Caco-2 (cell line): ENCODE measurements at regions of chr5 and their contacts with region 1.

Region 1: DNA sequence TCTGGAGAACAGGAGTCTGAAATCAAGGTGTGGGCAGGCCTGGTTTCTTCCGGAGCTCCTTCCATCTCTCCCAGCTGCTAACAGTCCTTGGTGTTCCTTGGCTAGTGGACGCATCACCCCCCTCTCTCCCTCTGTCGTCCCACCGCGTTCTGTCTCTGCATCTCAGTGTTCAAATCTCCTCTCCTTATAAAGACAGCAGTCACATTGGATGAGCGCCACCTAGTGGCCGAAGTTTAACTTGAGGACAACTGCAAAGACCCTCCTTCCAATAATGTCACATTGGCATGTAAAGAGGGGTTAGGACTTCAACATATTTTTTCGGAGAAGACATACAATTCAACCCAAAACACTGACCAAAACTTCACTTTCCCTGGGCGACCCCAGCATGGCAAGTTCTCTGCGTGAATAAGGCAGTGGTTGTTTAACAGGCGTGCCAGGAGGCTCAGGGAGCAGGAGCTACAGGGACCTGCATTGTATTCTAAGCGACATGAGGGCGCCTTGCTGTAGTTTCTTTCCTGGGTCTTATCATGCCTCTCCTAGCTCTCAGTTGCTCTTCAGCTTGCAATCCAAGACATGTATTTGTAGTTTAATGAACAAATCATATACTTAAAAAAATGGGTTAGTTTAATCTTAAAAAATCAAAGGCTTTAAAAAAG is 27.9 kb upstream of the BASP1 start:
- DNase-seq: peak; percentile 78 to 81
- H3K4me3 ChIP-seq: no peak overlapping the region
- H3K4me3 Mint-ChIP-seq: no peak overlapping the region
- H3K27ac Mint-ChIP-seq: peak overlapping the region; percentile 65
- H3K4me1 ChIP-seq: peaks cover 21% of the 10 kb centered on the region
- H3K4me1 Mint-ChIP-seq: peaks cover 28% of the 10 kb centered on the region
- H3K27me3 ChIP-seq: no peaks in the 10 kb centered on the region
- H3K27me3 Mint-ChIP-seq: no peaks in the 10 kb centered on the region
- CTCF ChIP-seq: peak; percentile 77 to 92

Region 2: DNA sequence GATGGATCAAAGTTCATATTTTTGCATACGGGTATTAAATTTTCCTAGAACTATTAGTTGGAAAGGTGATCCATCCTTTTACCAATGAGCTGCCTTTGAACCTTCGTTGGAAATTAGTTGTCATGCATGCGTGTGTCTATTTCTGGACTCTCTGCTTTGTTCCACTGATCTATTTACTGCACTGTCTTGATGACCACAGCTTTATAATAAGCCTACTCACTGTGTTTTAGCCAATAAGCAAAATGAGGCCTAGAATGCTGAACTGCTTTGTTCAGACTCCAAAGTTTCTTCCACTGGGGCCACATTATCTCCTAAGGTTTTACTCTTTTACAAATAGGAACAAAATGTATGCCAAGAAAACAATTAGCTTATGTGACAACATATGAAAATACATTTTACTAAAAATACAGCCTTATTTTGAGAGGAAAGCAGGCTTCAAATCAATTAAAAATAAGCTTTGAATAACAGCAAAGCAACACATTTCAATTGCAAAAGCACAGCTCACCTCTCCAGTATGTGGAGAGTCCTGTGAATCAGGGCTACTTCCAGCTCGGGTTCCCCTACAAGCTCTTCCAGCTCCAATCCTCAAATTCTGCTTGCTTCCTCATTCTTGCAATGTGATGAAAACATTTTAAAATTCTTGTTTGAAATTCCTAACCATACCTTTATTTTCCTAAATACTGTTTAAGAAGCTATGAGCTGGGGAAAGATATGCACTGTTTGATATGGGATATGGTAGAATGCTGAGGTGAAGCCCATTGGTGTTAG is 644.7 kb before region 1 on chr5:
- CTCF ChIA-PET with region 1: no interaction called
- POLR2A ChIA-PET with region 1: no interaction called
- intact Hi-C with region 1: no loop called
- DNase-seq: no peak
- H3K4me3 ChIP-seq: no peak overlapping the region
- H3K4me3 Mint-ChIP-seq: no peak overlapping the region
- H3K27ac Mint-ChIP-seq: peak overlapping the region; percentile 73
- H3K4me1 ChIP-seq: peaks cover 62% of the 10 kb centered on the region
- H3K4me1 Mint-ChIP-seq: peaks cover 56% of the 10 kb centered on the region
- H3K27me3 ChIP-seq: no peaks in the 10 kb centered on the region
- H3K27me3 Mint-ChIP-seq: no peaks in the 10 kb centered on the region
- CTCF ChIP-seq: no peak

Region 3: GRCh38 chr5:16690243-16690852 is 499.2 kb before region 1 on chr5:
- CTCF ChIA-PET with region 1: interaction called, 3 read pairs
- POLR2A ChIA-PET with region 1: no interaction called
- intact Hi-C with region 1: loop called (anchors 1 kb)
- DNase-seq: peak; percentile 54 to 76
- H3K4me3 ChIP-seq: no peak overlapping the region
- H3K4me3 Mint-ChIP-seq: no peak overlapping the region
- H3K27ac Mint-ChIP-seq: peak overlapping the region; percentile 13
- H3K4me1 ChIP-seq: no peaks in the 10 kb centered on the region
- H3K4me1 Mint-ChIP-seq: no peaks in the 10 kb centered on the region
- H3K27me3 ChIP-seq: no peaks in the 10 kb centered on the region
- H3K27me3 Mint-ChIP-seq: no peaks in the 10 kb centered on the region
- CTCF ChIP-seq: peak; percentile 79 to 81

Region 4: GRCh38 chr5:16791036-16791705 is 398.3 kb before region 1 on chr5:
- CTCF ChIA-PET with region 1: interaction called, 8 read pairs
- POLR2A ChIA-PET with region 1: no interaction called
- intact Hi-C with region 1: loop called (anchors 1 kb)
- DNase-seq: peak in 1 of 2 experiments; percentile 63
- H3K4me3 ChIP-seq: no peak overlapping the region
- H3K4me3 Mint-ChIP-seq: no peak overlapping the region
- H3K27ac Mint-ChIP-seq: no peak overlapping the region
- H3K4me1 ChIP-seq: no peaks in the 10 kb centered on the region
- H3K4me1 Mint-ChIP-seq: no peaks in the 10 kb centered on the region
- H3K27me3 ChIP-seq: no peaks in the 10 kb centered on the region; the same call in 1 of the 2 replicates
- H3K27me3 Mint-ChIP-seq: no peaks in the 10 kb centered on the region
- CTCF ChIP-seq: peak; percentile 65 to 73

Region 5: DNA sequence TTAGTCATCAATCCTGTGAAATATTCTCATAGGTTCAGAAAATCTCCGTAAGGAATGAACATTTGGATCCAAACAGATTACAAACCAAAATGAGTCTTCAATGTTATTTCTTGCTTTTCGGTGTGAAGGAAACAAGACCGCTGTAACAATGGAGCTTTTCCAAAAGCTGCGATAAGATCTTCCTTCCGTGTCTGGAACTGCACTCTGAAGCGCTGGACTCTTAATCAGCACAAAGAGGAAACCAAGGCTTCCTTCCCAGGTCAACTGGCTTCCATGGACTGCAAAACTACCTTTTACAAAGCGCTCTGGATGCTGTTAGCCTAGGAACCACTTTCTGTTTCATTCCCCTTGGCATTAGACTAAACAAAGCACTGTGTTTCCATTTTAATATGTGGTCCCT is 109.9 kb before region 1 on chr5:
- CTCF ChIA-PET with region 1: no interaction called
- POLR2A ChIA-PET with region 1: no interaction called
- intact Hi-C with region 1: loop called (anchors 5 kb)
- DNase-seq: no peak
- H3K4me3 ChIP-seq: no peak overlapping the region
- H3K4me3 Mint-ChIP-seq: no peak overlapping the region
- H3K27ac Mint-ChIP-seq: no peak overlapping the region
- H3K4me1 ChIP-seq: peaks cover 32% of the 10 kb centered on the region
- H3K4me1 Mint-ChIP-seq: peaks cover 34% of the 10 kb centered on the region
- H3K27me3 ChIP-seq: no peaks in the 10 kb centered on the region
- H3K27me3 Mint-ChIP-seq: no peaks in the 10 kb centered on the region
- CTCF ChIP-seq: no peak

Region 6: DNA sequence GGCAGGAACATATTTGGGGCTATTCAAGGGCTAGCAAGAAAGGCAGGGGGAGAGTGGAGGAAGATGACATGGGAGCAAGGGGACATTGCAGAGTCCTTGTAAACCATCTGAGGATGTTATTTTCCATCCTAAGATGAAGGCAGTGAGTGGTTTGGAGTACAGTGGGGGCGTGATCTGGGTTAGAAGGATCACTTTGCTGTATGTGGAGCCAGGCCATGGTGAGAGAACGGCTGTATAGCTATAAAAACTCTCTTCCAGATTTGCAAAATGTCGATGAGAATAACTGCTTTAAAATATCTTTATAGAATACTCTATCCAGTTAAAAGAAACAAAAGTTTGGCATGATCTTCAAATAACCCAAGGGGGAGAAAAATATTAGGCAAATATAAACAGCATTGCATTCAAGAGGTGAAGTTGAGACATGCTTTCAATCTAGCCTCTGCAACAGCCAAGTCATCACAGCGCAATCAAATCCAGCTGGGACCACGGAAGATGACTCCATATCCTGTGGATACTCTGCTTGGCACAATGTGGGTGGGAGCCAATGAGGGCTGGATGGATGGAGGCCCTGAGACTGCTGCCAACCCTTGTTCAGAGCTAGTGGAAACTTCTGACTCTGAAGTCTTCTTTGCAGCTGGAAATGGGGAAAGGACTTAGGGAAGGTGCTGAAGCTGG is 83.6 kb before region 1 on chr5:
- CTCF ChIA-PET with region 1: no interaction called
- POLR2A ChIA-PET with region 1: no interaction called
- intact Hi-C with region 1: no loop called
- DNase-seq: no peak
- H3K4me3 ChIP-seq: no peak overlapping the region
- H3K4me3 Mint-ChIP-seq: no peak overlapping the region
- H3K27ac Mint-ChIP-seq: no peak overlapping the region
- H3K4me1 ChIP-seq: no peaks in the 10 kb centered on the region; the same call in 1 of the 2 replicates
- H3K4me1 Mint-ChIP-seq: peaks cover 15% of the 10 kb centered on the region
- H3K27me3 ChIP-seq: no peaks in the 10 kb centered on the region
- H3K27me3 Mint-ChIP-seq: no peaks in the 10 kb centered on the region
- CTCF ChIP-seq: no peak

Region 7: DNA sequence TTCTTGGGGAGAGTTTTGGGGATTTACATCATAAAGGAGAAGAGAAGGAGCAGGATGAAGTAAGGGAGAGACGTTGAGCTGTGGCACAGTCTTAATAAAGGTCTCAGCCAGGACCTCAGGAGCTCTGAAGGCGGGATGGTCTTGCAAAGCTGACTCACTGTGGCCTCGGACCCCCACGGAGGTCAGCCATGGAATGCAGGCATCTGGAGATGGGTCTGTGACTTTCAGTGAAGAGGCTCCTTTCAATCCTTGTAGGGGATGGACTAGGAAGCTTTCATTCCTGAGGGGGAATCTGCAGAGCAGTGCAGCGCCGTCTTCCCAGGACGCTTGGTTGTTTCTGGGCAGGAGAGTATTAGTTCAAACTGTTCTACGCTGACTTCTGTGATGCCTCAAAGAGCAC is 37.8 kb before region 1 on chr5:
- CTCF ChIA-PET with region 1: no interaction called
- POLR2A ChIA-PET with region 1: no interaction called
- intact Hi-C with region 1: no loop called
- DNase-seq: no peak
- H3K4me3 ChIP-seq: no peak overlapping the region
- H3K4me3 Mint-ChIP-seq: no peak overlapping the region
- H3K27ac Mint-ChIP-seq: no peak overlapping the region
- H3K4me1 ChIP-seq: no peaks in the 10 kb centered on the region
- H3K4me1 Mint-ChIP-seq: no peaks in the 10 kb centered on the region
- H3K27me3 ChIP-seq: no peaks in the 10 kb centered on the region
- H3K27me3 Mint-ChIP-seq: no peaks in the 10 kb centered on the region
- CTCF ChIP-seq: no peak

Region 8: DNA sequence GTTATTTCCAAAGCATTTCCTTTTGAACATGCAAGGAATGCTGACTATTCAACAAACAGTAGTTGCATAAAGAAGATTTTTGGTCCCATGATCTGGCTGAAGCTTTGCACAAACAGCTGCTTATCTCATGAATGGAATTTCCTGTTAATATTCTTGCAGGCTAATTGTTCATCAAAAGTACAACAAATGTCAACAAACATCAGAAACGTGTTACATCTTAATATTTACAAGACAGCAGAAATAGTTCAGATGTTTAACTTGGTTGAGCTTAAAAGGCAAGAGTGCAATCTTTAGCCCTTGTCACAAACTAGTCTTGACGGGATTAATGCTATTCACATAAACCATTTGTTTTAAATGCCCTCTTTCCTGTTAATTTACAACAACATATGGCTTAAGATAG is 20.0 kb before region 1 on chr5:
- CTCF ChIA-PET with region 1: interaction called, 3 read pairs
- POLR2A ChIA-PET with region 1: no interaction called
- intact Hi-C with region 1: loop called (anchors 1 kb)
- DNase-seq: peak; percentile 48 to 70
- H3K4me3 ChIP-seq: no peak overlapping the region
- H3K4me3 Mint-ChIP-seq: no peak overlapping the region
- H3K27ac Mint-ChIP-seq: peak overlapping the region; percentile 24
- H3K4me1 ChIP-seq: peaks cover 26% of the 10 kb centered on the region
- H3K4me1 Mint-ChIP-seq: peaks cover 31% of the 10 kb centered on the region
- H3K27me3 ChIP-seq: no peaks in the 10 kb centered on the region
- H3K27me3 Mint-ChIP-seq: no peaks in the 10 kb centered on the region
- CTCF ChIP-seq: no peak